ENCODE measurements at regions of chr5 and their contacts with region 1.

Region 1: GRCh38 chr5:96934708-96935558 is 947 bp upstream of the LNPEP start:
- DNase-seq: peak; percentile 96 to 97
- ATAC-seq: peak; percentile 66 to 88 (median 76)
- H3K4me3 ChIP-seq: peak overlapping the region; percentile 93
- H3K4me3 Mint-ChIP-seq: peak overlapping the region; percentile 91
- H3K27ac ChIP-seq: peak overlapping the region; percentile 91
- H3K27ac Mint-ChIP-seq: peak overlapping the region; percentile 93 to 94
- H3K4me1 ChIP-seq: peaks cover 19% of the 10 kb centered on the region
- H3K4me1 Mint-ChIP-seq: peaks cover 77 to 82% of the 10 kb centered on the region in 2 donors
- H3K27me3 ChIP-seq: no peaks in the 10 kb centered on the region
- H3K27me3 Mint-ChIP-seq: no peaks in the 10 kb centered on the region
- CTCF ChIP-seq: no peak

Region 2: GRCh38 chr5:95822542-95823181 is 1112.3 kb before region 1 on chr5 and contains the start of gene GLRX:
- intact Hi-C with region 1: loop called (anchors 5 kb)
- DNase-seq: peak in 1 of 2 donors; percentile 75
- ATAC-seq: peak; percentile 22 to 40 (median 37)
- H3K4me3 ChIP-seq: peak within 1 kb of the TSS; percentile 76
- H3K4me3 Mint-ChIP-seq: peak within 1 kb of the TSS; percentile 99
- H3K27ac ChIP-seq: peak within 1 kb of the TSS; percentile 86
- H3K27ac Mint-ChIP-seq: peak within 1 kb of the TSS; percentile 81 to 92
- H3K4me1 ChIP-seq: peaks cover 64% of the 10 kb centered on the region
- H3K4me1 Mint-ChIP-seq: peaks cover 75 to 77% of the 10 kb centered on the region in 2 donors
- H3K27me3 ChIP-seq: no peaks in the 10 kb centered on the region
- H3K27me3 Mint-ChIP-seq: no peaks in the 10 kb centered on the region
- CTCF ChIP-seq: no peak
- total RNA-seq, gene GLRX: 59.2 to 102 (median 62.5) TPM

Region 3: GRCh38 chr5:96662725-96663513 is 272.0 kb before region 1 on chr5:
- intact Hi-C with region 1: loop called (anchors 1 kb)
- DNase-seq: peak; percentile 82 to 88
- ATAC-seq: peak; percentile 64 to 81 (median 68)
- H3K4me3 ChIP-seq: peak overlapping the region; percentile 83
- H3K4me3 Mint-ChIP-seq: peak overlapping the region; percentile 95
- H3K27ac ChIP-seq: peak overlapping the region; percentile 96
- H3K27ac Mint-ChIP-seq: peak overlapping the region; percentile 98 to 99
- H3K4me1 ChIP-seq: peaks cover 33% of the 10 kb centered on the region
- H3K4me1 Mint-ChIP-seq: peaks cover 74 to 80% of the 10 kb centered on the region in 2 donors
- H3K27me3 ChIP-seq: no peaks in the 10 kb centered on the region
- H3K27me3 Mint-ChIP-seq: no peaks in the 10 kb centered on the region
- CTCF ChIP-seq: no peak

Region 4: GRCh38 chr5:96876292-96876850 is 58.6 kb before region 1 on chr5 and contains the start of gene ERAP2:
- intact Hi-C with region 1: loop called (anchors 2 kb)
- DNase-seq: peak in 1 of 2 donors; percentile 76
- ATAC-seq: peak; percentile 82 to 85 (median 82)
- H3K4me3 ChIP-seq: peak within 1 kb of the TSS; percentile 96
- H3K4me3 Mint-ChIP-seq: peak within 1 kb of the TSS; percentile 98
- H3K27ac ChIP-seq: peak within 1 kb of the TSS; percentile 90
- H3K27ac Mint-ChIP-seq: peak within 1 kb of the TSS; percentile 87 to 94
- H3K4me1 ChIP-seq: peaks cover 22% of the 10 kb centered on the region
- H3K4me1 Mint-ChIP-seq: peaks cover 26 to 44% of the 10 kb centered on the region in 2 donors
- H3K27me3 ChIP-seq: no peaks in the 10 kb centered on the region
- H3K27me3 Mint-ChIP-seq: no peaks in the 10 kb centered on the region
- CTCF ChIP-seq: no peak
- total RNA-seq, gene ERAP2: 41.5 to 81.8 (median 79.2) TPM

Region 5: GRCh38 chr5:96957254-96958049 is 22.5 kb after region 1 on chr5:
- intact Hi-C with region 1: loop called (anchors 1 kb)
- DNase-seq: peak in 1 of 2 donors; percentile 44
- ATAC-seq: peak; percentile 75 to 87 (median 76)
- H3K4me3 ChIP-seq: no peak overlapping the region
- H3K4me3 Mint-ChIP-seq: peak overlapping the region; percentile 67
- H3K27ac ChIP-seq: peak overlapping the region; percentile 59
- H3K27ac Mint-ChIP-seq: peak overlapping the region; percentile 81 to 95
- H3K4me1 ChIP-seq: peaks cover 38% of the 10 kb centered on the region
- H3K4me1 Mint-ChIP-seq: peaks cover 63 to 65% of the 10 kb centered on the region in 2 donors
- H3K27me3 ChIP-seq: no peaks in the 10 kb centered on the region
- H3K27me3 Mint-ChIP-seq: no peaks in the 10 kb centered on the region
- CTCF ChIP-seq: no peak

Region 6: GRCh38 chr5:97183100-97183929 is 248.4 kb after region 1 on chr5 and contains the start of gene RIOK2:
- intact Hi-C with region 1: loop called (anchors 1 kb)
- DNase-seq: peak; percentile 81 to 96
- ATAC-seq: peak; percentile 91 to 97 (median 91)
- H3K4me3 ChIP-seq: peak within 1 kb of the TSS; percentile 57
- H3K4me3 Mint-ChIP-seq: peak within 1 kb of the TSS; percentile 95
- H3K27ac ChIP-seq: peak within 1 kb of the TSS; percentile 91
- H3K27ac Mint-ChIP-seq: peak within 1 kb of the TSS; percentile 98 to 99
- H3K4me1 ChIP-seq: peaks cover 10% of the 10 kb centered on the region
- H3K4me1 Mint-ChIP-seq: peaks cover 33 to 37% of the 10 kb centered on the region in 2 donors
- H3K27me3 ChIP-seq: no peaks in the 10 kb centered on the region
- H3K27me3 Mint-ChIP-seq: peaks cover 12 to 14% of the 10 kb centered on the region in 2 donors
- CTCF ChIP-seq: no peak
- total RNA-seq, gene RIOK2: 26.3 to 31.0 (median 28.2) TPM